Heart left ventricle (tissue), 16 donors: ENCODE measurements at regions of chr15 and their contacts with region 1.

Region 1: GRCh38 chr15:98779463-98780071 is 131.2 kb downstream of the IGF1R start:
- DNase-seq: peak; percentile 73 to 89 (median 83)
- ATAC-seq: peak; percentile 68 to 91 (median 88)
- H3K4me3 ChIP-seq: no peak overlapping the region
- H3K27ac ChIP-seq: peak overlapping the region in 7 of 12 donors; percentile 13 to 67 (median 30)
- H3K4me1 ChIP-seq: peaks cover 0 to 53% (median 30%) of the 10 kb centered on the region in 12 donors
- H3K27me3 ChIP-seq: no peaks in the 10 kb centered on the region
- CTCF ChIP-seq: peak; percentile 81 to 95 (median 92)
- POLR2A ChIP-seq: no peak

Region 2: DNA sequence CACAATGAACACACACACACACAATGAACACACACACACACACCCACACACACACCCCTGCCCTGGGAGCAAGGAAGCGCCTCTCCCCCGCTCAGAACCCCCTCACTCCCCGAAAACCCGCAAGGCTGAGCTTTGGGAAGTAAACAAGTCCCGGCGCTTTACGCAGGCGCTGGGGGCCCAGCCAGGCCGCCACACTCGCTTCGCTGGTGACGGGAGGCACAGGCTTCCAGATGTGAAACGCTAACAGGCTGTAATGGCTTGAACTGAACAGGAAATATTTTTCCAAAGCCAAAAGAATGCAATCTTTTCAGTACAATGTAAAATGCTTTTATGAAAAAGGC is 253.9 kb before region 1 on chr15:
- intact Hi-C with region 1: loop called in 1 of 10 experiments (anchors 10 kb)
- DNase-seq: no peak
- ATAC-seq: peak in 1 of 4 donors; percentile 32
- H3K4me3 ChIP-seq: peak overlapping the region in 1 of 12 donors; percentile 19
- H3K27ac ChIP-seq: no peak overlapping the region
- H3K4me1 ChIP-seq: no peaks in the 10 kb centered on the region
- H3K27me3 ChIP-seq: peaks cover 0 to 10% (median 0%) of the 10 kb centered on the region in 9 donors
- CTCF ChIP-seq: no peak
- POLR2A ChIP-seq: no peak

Region 3: DNA sequence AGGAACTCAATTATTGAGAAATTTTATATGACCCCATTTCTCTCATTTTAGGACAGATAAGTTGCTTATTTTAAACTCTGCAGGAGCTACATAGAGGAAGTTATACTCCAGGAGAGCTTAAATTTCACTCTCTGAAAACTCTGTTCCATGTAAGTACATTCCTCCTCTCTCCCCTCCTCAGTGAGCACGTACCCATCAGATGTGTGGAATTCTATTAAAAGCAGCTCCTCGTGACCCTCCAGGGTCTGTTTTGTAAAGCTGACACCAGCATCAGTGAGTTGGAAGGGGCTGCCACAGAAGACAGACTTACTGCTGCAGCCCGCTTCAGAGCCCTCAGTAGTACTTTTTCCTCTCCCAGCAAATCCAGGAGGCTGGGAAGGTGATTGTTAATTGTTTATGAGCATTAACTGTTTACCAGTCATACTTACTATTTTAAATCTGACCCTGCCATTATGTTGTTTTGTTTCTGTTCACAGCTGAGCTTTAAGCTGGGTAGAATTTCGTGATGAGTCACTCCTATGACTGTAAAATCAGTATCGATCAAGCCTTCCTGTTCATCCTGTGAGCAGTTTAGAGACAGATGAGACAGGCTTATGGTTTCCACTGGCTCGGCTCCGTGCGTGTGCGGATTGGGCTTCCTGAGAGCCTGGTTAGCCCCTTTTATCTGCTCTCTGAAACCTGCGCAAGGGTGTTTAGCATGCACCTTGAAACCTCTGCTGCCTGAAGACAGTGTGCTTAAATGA is 110.8 kb before region 1 on chr15:
- intact Hi-C with region 1: loop called in 3 of 10 experiments (anchors 5 kb)
- DNase-seq: no peak
- ATAC-seq: peak in 1 of 4 donors; percentile 34
- H3K4me3 ChIP-seq: peak overlapping the region in 1 of 12 donors; percentile 1
- H3K27ac ChIP-seq: peak overlapping the region in 11 of 12 donors; percentile 34 to 90 (median 62)
- H3K4me1 ChIP-seq: peaks cover 0 to 92% (median 55%) of the 10 kb centered on the region in 12 donors
- H3K27me3 ChIP-seq: no peaks in the 10 kb centered on the region
- CTCF ChIP-seq: no peak
- POLR2A ChIP-seq: no peak

Region 4: DNA sequence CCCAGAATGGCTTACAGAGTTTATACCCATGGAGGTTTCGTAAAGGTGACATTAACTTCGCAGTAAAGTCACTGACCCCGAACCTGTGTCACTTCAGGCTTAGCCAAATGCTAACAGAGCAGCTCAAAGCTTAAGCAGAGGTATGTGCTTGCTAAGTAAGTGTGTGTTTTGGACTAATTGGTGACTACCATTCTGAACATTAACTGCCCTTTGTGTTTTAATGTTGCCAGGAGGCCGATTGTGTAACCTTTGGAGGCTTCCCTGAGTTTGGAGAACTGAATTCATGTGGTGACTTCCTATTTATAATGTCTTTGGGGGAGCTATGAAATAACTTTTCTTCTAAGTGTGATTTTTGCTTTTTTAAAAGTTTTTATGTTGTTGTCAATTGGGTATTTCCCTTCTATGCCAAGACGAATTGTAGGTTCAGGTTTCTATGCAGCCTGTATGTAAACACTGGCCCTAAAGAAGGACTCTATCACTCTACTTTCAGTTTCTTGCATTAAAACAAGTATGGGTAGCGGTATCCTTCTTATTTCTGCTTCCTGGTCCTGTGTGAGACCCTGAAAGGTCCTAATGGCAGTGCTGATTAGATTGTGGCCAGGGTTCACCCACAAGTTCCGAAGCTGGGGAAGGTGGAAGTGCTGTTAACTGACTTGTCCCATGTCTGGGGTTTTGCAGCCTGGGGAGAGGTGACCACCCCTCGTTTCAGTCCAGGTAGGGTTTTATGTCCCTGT is 44.9 kb before region 1 on chr15:
- intact Hi-C with region 1: loop called in 2 of 10 experiments (anchors 5 kb)
- DNase-seq: no peak
- ATAC-seq: peak in 1 of 4 donors; percentile 12
- H3K4me3 ChIP-seq: no peak overlapping the region
- H3K27ac ChIP-seq: peak overlapping the region in 9 of 12 donors; percentile 6 to 73 (median 38)
- H3K4me1 ChIP-seq: peaks cover 0 to 93% (median 54%) of the 10 kb centered on the region in 12 donors
- H3K27me3 ChIP-seq: no peaks in the 10 kb centered on the region
- CTCF ChIP-seq: no peak
- POLR2A ChIP-seq: no peak

Region 5: GRCh38 chr15:98881526-98882520 is 102.3 kb after region 1 on chr15:
- intact Hi-C with region 1: loop called in 3 of 10 experiments (anchors 5 kb)
- DNase-seq: no peak
- ATAC-seq: peak in 2 of 4 donors; percentile 37 to 40
- H3K4me3 ChIP-seq: no peak overlapping the region
- H3K27ac ChIP-seq: no peak overlapping the region
- H3K4me1 ChIP-seq: peaks cover 0 to 82% (median 44%) of the 10 kb centered on the region in 12 donors
- H3K27me3 ChIP-seq: no peaks in the 10 kb centered on the region
- CTCF ChIP-seq: peak; percentile 47 to 71 (median 60)
- POLR2A ChIP-seq: no peak

Region 6: GRCh38 chr15:99068186-99068585 is 288.6 kb after region 1 on chr15:
- intact Hi-C with region 1: loop called in 4 of 10 experiments (anchors 5 to 10 kb)
- DNase-seq: peak in 1 of 5 donors; percentile 12
- ATAC-seq: no peak
- H3K4me3 ChIP-seq: no peak overlapping the region
- H3K27ac ChIP-seq: no peak overlapping the region
- H3K4me1 ChIP-seq: peaks cover 0 to 6% (median 0%) of the 10 kb centered on the region in 12 donors
- H3K27me3 ChIP-seq: no peaks in the 10 kb centered on the region
- CTCF ChIP-seq: no peak
- POLR2A ChIP-seq: no peak